Mammary epithelial cell (primary cell): ENCODE measurements at regions of chr1 and their contacts with region 1.

Region 1: GRCh38 chr1:22976461-22977243 is 4.0 kb upstream of the LACTBL1 start:
- DNase-seq: peak; percentile 79
- H3K4me3 ChIP-seq: no peak overlapping the region
- H3K27ac ChIP-seq: no peak overlapping the region
- H3K4me1 ChIP-seq: peaks cover 17% of the 10 kb centered on the region
- H3K27me3 ChIP-seq: no peaks in the 10 kb centered on the region
- CTCF ChIP-seq: peak; percentile 90 to 91

Region 2: GRCh38 chr1:22914633-22915217 is 61.9 kb before region 1 on chr1:
- CTCF ChIA-PET with region 1: no interaction called
- dilution Hi-C with region 1: no loop called
- in situ Hi-C with region 1: no loop called
- intact Hi-C with region 1: no loop called
- DNase-seq: no peak
- H3K4me3 ChIP-seq: no peak overlapping the region
- H3K27ac ChIP-seq: no peak overlapping the region
- H3K4me1 ChIP-seq: no peaks in the 10 kb centered on the region
- H3K27me3 ChIP-seq: no peaks in the 10 kb centered on the region
- CTCF ChIP-seq: no peak

Region 3: GRCh38 chr1:23081376-23081775 is 104.7 kb after region 1 on chr1:
- CTCF ChIA-PET with region 1: no interaction called
- dilution Hi-C with region 1: no loop called
- in situ Hi-C with region 1: loop called in 1 of 2 experiments (anchors 10 kb)
- intact Hi-C with region 1: loop called (anchors 2 kb)
- DNase-seq: no peak
- H3K4me3 ChIP-seq: no peak overlapping the region
- H3K27ac ChIP-seq: no peak overlapping the region
- H3K4me1 ChIP-seq: peaks cover 4% of the 10 kb centered on the region
- H3K27me3 ChIP-seq: no peaks in the 10 kb centered on the region
- CTCF ChIP-seq: peak; percentile 45 to 52

Region 4: GRCh38 chr1:23210351-23210785 is 233.7 kb after region 1 on chr1:
- CTCF ChIA-PET with region 1: no interaction called
- dilution Hi-C with region 1: no loop called
- in situ Hi-C with region 1: loop called in 1 of 2 experiments (anchors 10 kb)
- intact Hi-C with region 1: loop called (anchors 1 kb)
- DNase-seq: peak; percentile 62
- H3K4me3 ChIP-seq: no peak overlapping the region
- H3K27ac ChIP-seq: no peak overlapping the region
- H3K4me1 ChIP-seq: peaks cover 17% of the 10 kb centered on the region
- H3K27me3 ChIP-seq: no peaks in the 10 kb centered on the region
- CTCF ChIP-seq: peak; percentile 12 to 32

Region 5: GRCh38 chr1:23337869-23338268 is 361.2 kb after region 1 on chr1:
- CTCF ChIA-PET with region 1: no interaction called
- dilution Hi-C with region 1: no loop called
- in situ Hi-C with region 1: no loop called
- intact Hi-C with region 1: no loop called
- DNase-seq: no peak
- H3K4me3 ChIP-seq: no peak overlapping the region
- H3K27ac ChIP-seq: no peak overlapping the region
- H3K4me1 ChIP-seq: peaks cover 15% of the 10 kb centered on the region
- H3K27me3 ChIP-seq: no peaks in the 10 kb centered on the region
- CTCF ChIP-seq: no peak

Region 6: DNA sequence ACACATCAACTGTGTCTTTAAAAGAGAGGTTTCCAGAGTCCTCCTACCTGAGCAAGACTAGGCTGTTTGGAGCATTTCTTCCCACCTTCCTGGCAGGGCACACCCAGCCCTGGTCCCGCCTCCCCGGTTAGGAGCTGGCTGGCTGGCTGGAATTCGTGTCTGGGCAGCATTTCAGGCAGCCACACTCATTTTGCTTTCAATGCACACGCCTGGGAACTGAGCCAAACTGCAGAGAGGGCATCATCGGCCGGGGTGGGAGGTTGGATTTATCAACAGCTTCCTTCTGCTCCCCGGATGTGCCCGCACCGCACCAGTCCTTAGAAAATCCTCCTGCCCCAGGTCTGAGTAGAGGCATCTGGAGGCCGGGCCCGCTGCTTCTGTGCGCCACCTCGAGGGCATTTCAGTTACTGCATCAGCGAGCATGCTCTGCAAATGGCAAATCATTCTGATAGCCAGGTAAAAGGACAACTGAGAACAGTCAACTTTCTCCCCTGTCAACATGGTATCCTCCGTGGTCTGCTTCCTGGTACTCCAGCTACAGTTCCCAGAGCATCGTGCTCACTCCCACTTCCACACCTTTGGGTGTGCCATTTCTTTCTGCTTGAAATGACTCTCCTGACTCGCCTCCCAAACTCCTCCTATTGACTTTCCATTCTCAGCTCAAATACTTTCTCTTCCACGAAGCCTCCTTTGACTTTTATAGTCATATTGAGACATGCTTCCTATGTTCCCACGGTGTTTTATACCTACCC is 427.3 kb after region 1 on chr1:
- CTCF ChIA-PET with region 1: interaction called, 4 read pairs
- dilution Hi-C with region 1: no loop called
- in situ Hi-C with region 1: no loop called
- intact Hi-C with region 1: loop called (anchors 1 kb)
- DNase-seq: peak; percentile 100
- H3K4me3 ChIP-seq: peak overlapping the region in 2 of 3 experiments; percentile 4 to 21
- H3K27ac ChIP-seq: peak overlapping the region; percentile 85
- H3K4me1 ChIP-seq: peaks cover 20% of the 10 kb centered on the region
- H3K27me3 ChIP-seq: no peaks in the 10 kb centered on the region
- CTCF ChIP-seq: peak; percentile 97 to 98

Region 7: GRCh38 chr1:23452011-23452411 is 475.4 kb after region 1 on chr1:
- CTCF ChIA-PET with region 1: no interaction called
- dilution Hi-C with region 1: no loop called
- in situ Hi-C with region 1: no loop called
- intact Hi-C with region 1: no loop called
- DNase-seq: peak; percentile 94
- H3K4me3 ChIP-seq: no peak overlapping the region
- H3K27ac ChIP-seq: no peak overlapping the region
- H3K4me1 ChIP-seq: peaks cover 31% of the 10 kb centered on the region
- H3K27me3 ChIP-seq: no peaks in the 10 kb centered on the region
- CTCF ChIP-seq: no peak

Region 8: GRCh38 chr1:23530747-23531561 is 554.3 kb after region 1 on chr1 and contains the start of gene E2F2:
- CTCF ChIA-PET with region 1: no interaction called
- dilution Hi-C with region 1: no loop called
- in situ Hi-C with region 1: loop called in 1 of 2 experiments (anchors 5 kb)
- intact Hi-C with region 1: no loop called
- DNase-seq: peak; percentile 84
- H3K4me3 ChIP-seq: peak within 1 kb of the TSS; percentile 46 to 65 (median 58)
- H3K27ac ChIP-seq: peak within 1 kb of the TSS; percentile 12
- H3K4me1 ChIP-seq: peaks cover 34% of the 10 kb centered on the region
- H3K27me3 ChIP-seq: no peaks in the 10 kb centered on the region
- CTCF ChIP-seq: peak in 1 of 2 donors; percentile 31
- total RNA-seq, gene E2F2: 0.17 to 2.2 TPM

Region 9: DNA sequence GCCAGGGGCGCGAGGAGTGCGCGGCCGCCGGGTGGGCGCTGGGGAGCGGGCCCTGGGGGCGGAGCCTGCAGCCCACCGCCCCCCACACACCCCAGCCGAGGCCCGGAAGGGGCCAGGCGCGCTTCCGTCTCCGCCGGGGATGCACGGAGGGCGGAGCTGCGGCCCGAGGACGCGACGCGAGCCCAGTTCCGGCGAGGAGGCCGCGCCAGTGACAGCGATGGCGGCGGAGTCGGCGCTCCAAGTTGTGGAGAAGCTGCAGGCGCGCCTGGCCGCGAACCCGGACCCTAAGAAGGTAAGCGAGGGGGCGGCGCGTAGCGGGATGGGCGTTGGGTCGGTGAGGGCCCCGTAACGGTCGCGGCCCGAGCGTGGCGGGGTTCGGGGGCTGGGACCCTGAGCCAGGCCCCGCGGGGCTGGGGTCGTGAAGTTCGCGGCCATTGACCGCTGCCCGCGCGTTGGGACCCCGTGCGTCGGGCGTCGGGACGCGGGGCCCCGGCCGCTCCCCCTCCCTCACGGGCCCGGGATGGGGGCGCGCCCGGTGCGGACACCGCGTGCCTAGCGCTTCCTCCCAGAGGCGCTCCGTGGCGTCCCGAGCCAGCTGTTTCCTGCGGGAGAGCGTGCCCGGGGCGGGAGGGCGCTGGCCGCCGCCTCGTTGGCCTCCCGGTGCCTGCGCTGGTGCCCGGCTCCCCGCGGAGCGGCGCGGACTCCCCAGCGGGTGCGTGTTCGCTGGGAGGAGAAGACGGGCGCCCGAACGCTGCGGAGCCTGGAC is 766.8 kb after region 1 on chr1 and contains the start of gene ELOA:
- CTCF ChIA-PET with region 1: no interaction called
- dilution Hi-C with region 1: no loop called
- in situ Hi-C with region 1: no loop called
- intact Hi-C with region 1: loop called (anchors 10 kb)
- DNase-seq: peak; percentile 61
- H3K4me3 ChIP-seq: peak within 1 kb of the TSS; percentile 60 to 93 (median 84)
- H3K27ac ChIP-seq: peak within 1 kb of the TSS; percentile 63
- H3K4me1 ChIP-seq: peaks cover 16% of the 10 kb centered on the region
- H3K27me3 ChIP-seq: no peaks in the 10 kb centered on the region
- CTCF ChIP-seq: no peak
- total RNA-seq, gene ELOA: 38.0 to 59.9 TPM

Region 10: DNA sequence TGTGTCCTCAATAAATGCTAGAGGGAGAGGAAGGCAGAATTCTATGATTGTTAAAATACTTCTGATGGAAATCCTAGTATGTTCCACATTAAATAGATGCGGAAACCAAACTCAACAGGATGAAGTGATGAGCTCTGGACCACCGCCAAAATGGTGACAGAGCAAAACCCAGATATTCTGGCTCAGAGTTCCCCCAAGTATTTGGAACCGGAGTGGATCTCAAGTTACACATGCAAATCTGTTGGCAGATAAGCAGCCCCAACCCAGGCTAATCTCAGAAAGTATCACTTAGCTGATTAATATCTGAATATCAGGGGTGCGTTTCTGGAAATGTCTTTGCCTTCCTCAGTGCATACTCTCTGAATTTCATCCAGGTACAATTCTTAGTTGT is 1325.1 kb after region 1 on chr1:
- CTCF ChIA-PET with region 1: no interaction called
- dilution Hi-C with region 1: no loop called
- in situ Hi-C with region 1: no loop called
- intact Hi-C with region 1: no loop called
- DNase-seq: no peak
- H3K4me3 ChIP-seq: no peak overlapping the region
- H3K27ac ChIP-seq: no peak overlapping the region
- H3K4me1 ChIP-seq: peaks cover 17% of the 10 kb centered on the region
- H3K27me3 ChIP-seq: no peaks in the 10 kb centered on the region
- CTCF ChIP-seq: no peak